SK-N-SH (cell line): ENCODE measurements at regions of chr3 and their contacts with region 1.

Region 1: DNA sequence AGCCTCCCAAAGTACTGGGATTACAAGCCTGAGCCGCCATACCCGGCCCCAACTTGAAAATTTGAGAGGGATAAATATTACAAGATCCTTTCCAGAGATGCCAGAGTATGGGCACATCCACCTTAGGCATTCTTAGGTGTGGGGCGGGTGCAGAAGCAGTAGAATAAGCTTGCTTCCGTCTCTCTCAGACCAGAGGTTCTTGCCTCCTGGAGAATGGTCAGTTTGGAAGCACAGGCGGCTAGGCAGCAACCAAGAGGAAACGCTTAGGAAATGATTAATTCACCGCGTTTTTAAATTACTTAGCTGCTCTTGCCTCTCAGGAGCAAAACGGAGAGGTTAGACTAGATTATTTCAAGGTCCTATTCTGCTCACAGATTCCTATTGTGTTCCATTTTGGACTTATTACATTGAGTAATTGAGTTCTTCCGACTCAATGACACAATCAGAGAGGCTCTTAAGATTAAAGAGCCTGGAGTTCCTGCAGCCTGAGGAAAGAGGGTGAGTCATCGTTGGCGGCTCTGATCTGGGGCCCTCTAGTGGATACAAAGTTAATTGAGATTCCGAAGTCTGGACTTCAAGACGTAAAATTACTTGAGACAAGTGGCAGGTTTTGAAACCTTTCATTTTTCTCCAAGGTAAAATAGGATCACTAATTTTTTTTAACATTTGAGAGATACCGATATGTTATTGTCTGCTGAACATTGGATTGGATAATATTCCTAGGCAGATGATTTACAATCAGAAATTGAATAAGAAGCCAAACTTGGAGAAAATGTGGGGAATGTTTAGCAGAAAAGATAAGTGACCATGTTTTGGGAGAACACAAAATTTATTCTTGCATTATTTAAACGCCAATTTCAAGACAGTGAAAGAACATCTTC is 5.8 kb upstream of the TOPAZ1 start:
- DNase-seq: peak; percentile 67
- H3K4me3 ChIP-seq: no peak overlapping the region
- H3K27ac ChIP-seq: no peak overlapping the region
- H3K4me1 ChIP-seq: no peaks in the 10 kb centered on the region; a peak in 1 of 4 replicates
- H3K27me3 ChIP-seq: no peaks in the 10 kb centered on the region
- CTCF ChIP-seq: peak; percentile 81
- EP300 ChIP-seq: no peak
- RAD21 ChIP-seq: peak; percentile 67

Region 2: DNA sequence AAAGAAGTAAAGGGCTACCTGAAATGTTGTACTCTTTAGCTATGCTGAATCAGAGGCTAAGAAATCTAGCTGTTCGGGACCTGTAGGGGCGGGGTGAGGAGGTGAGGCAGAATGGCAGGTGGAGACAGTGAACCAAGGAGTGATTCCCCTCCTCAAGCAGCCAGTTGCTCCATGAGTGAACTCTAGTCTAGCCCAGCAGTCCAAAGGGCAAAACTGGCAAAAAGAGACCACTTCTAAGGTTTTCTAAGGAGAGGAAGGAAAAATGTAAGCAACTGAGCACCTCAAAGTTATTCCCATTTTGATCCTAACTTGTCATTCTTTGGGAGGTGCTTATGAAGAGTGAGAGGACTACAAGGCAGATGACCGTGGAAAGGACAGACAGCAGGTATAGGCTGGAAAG is 13.5 kb before region 1 on chr3:
- CTCF ChIA-PET with region 1: interaction called, 17 read pairs
- POLR2A ChIA-PET with region 1: no interaction called
- DNase-seq: no peak
- H3K4me3 ChIP-seq: no peak overlapping the region
- H3K27ac ChIP-seq: no peak overlapping the region
- H3K4me1 ChIP-seq: no peaks in the 10 kb centered on the region
- H3K27me3 ChIP-seq: no peaks in the 10 kb centered on the region; the same call in 1 of the 2 replicates
- CTCF ChIP-seq: no peak
- EP300 ChIP-seq: no peak
- RAD21 ChIP-seq: no peak

Region 3: GRCh38 chr3:44252332-44252959 is 16.6 kb after region 1 on chr3:
- CTCF ChIA-PET with region 1: interaction called, 36 read pairs
- POLR2A ChIA-PET with region 1: no interaction called
- DNase-seq: peak; percentile 27
- H3K4me3 ChIP-seq: no peak overlapping the region
- H3K27ac ChIP-seq: no peak overlapping the region
- H3K4me1 ChIP-seq: no peaks in the 10 kb centered on the region; a peak in 1 of 4 replicates
- H3K27me3 ChIP-seq: no peaks in the 10 kb centered on the region
- CTCF ChIP-seq: no peak
- EP300 ChIP-seq: no peak
- RAD21 ChIP-seq: no peak

Region 4: GRCh38 chr3:44318891-44319311 is 83.1 kb after region 1 on chr3:
- CTCF ChIA-PET with region 1: no interaction called
- POLR2A ChIA-PET with region 1: no interaction called
- DNase-seq: peak; percentile 8
- H3K4me3 ChIP-seq: no peak overlapping the region
- H3K27ac ChIP-seq: no peak overlapping the region
- H3K4me1 ChIP-seq: no peaks in the 10 kb centered on the region
- H3K27me3 ChIP-seq: no peaks in the 10 kb centered on the region; the same call in 1 of the 2 replicates
- CTCF ChIP-seq: no peak
- EP300 ChIP-seq: no peak
- RAD21 ChIP-seq: peak; percentile 28